ENCODE measurements at regions of chr7 and their contacts with region 1.

Region 1: GRCh38 chr7:106659963-106660861 is 746 bp downstream of the CCDC71L start:
- DNase-seq: peak; percentile 58 to 84 (median 68)
- ATAC-seq: peak; percentile 72
- H3K4me3 ChIP-seq: peak overlapping the region; percentile 73
- H3K4me3 Mint-ChIP-seq: peak overlapping the region; percentile 85 to 97 (median 91)
- H3K27ac ChIP-seq: peak overlapping the region; percentile 68
- H3K27ac Mint-ChIP-seq: peak overlapping the region; percentile 86 to 97 (median 92)
- H3K4me1 ChIP-seq: peaks cover 13 to 16% of the 10 kb centered on the region in 2 donors
- H3K4me1 Mint-ChIP-seq: peaks cover 0 to 41% (median 29%) of the 10 kb centered on the region in 7 donors
- H3K27me3 ChIP-seq: no peaks in the 10 kb centered on the region
- H3K27me3 Mint-ChIP-seq: peaks cover 0 to 3% (median 0%) of the 10 kb centered on the region in 5 donors

Region 2: DNA sequence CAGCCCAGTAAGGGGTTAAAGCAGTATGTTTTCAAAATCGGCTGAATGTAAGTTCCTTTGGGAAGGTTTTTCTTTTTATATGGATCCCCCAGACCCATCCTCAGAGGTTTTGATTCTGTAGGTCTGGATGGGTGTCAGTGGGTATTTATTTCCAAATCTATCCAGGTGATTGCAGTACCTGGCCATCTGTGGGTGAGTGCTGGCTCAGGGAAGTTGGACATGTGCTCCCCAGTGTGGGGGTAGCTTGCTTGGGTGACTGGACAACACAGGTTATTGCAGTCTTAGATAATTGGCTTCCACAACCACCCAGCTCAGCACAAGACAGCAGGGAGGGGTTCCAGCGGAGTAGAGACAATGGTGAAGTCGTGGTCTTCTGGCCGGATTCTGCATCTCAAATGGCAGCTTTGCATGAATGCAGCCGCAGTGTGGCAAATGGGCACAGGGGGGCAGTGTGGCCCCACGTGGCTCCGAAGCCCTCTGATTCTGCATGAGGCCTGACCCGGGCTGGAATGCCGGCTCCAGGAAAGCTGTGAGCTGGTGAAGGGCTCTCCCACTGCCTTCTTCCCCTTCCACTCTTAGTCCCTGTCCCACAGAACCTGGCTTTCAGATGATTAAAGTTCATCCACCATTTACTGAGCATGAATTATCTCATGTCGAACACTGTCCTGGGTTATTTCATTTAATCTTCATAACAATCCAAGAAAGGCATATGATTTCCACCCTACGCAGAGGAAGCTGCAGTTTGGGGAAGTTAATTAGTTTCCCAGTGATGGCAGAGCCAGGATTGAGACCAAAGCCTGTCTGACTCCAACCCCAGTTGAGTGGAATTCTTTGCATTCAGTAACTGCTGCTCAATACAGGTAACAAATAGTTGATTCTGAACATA is 483.6 kb before region 1 on chr7:
- CTCF ChIA-PET with region 1: no interaction called
- POLR2A ChIA-PET with region 1: no interaction called
- intact Hi-C with region 1: loop called (anchors 1 kb)
- DNase-seq: peak; percentile 24 to 73 (median 57)
- ATAC-seq: peak; percentile 92
- H3K4me3 ChIP-seq: no peak overlapping the region
- H3K4me3 Mint-ChIP-seq: no peak overlapping the region
- H3K27ac ChIP-seq: no peak overlapping the region
- H3K27ac Mint-ChIP-seq: no peak overlapping the region
- H3K4me1 ChIP-seq: no peaks in the 10 kb centered on the region
- H3K4me1 Mint-ChIP-seq: peaks cover 0 to 5% (median 0%) of the 10 kb centered on the region in 7 donors
- H3K27me3 ChIP-seq: peaks cover 0 to 7% of the 10 kb centered on the region in 2 donors
- H3K27me3 Mint-ChIP-seq: peaks cover 9 to 22% (median 19%) of the 10 kb centered on the region in 5 donors

Region 3: DNA sequence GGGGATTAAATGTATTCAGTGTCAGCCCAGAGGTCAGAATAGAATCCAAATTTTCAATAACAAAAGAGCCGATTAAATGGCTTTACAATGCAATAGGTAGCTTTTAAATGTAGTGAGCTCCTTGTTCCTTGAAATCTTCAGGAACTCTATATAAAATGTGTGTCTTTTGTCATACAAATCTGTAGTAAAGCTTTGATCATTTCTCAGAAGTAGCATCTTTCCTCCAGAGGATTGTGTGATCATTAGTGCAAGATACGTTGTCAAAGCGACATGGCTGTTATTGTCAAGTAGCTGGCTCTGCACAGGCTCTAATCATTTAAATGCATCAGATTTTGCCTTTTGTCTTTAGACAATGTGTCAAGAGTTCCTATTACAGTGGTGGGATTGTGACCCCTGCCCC is 259.3 kb before region 1 on chr7:
- CTCF ChIA-PET with region 1: no interaction called
- POLR2A ChIA-PET with region 1: no interaction called
- intact Hi-C with region 1: no loop called
- DNase-seq: no peak
- ATAC-seq: no peak
- H3K4me3 ChIP-seq: no peak overlapping the region
- H3K4me3 Mint-ChIP-seq: no peak overlapping the region
- H3K27ac ChIP-seq: no peak overlapping the region
- H3K27ac Mint-ChIP-seq: no peak overlapping the region
- H3K4me1 ChIP-seq: no peaks in the 10 kb centered on the region
- H3K4me1 Mint-ChIP-seq: peaks cover 0 to 8% (median 0%) of the 10 kb centered on the region in 7 donors
- H3K27me3 ChIP-seq: no peaks in the 10 kb centered on the region
- H3K27me3 Mint-ChIP-seq: peaks cover 24 to 63% (median 33%) of the 10 kb centered on the region in 5 donors

Region 4: DNA sequence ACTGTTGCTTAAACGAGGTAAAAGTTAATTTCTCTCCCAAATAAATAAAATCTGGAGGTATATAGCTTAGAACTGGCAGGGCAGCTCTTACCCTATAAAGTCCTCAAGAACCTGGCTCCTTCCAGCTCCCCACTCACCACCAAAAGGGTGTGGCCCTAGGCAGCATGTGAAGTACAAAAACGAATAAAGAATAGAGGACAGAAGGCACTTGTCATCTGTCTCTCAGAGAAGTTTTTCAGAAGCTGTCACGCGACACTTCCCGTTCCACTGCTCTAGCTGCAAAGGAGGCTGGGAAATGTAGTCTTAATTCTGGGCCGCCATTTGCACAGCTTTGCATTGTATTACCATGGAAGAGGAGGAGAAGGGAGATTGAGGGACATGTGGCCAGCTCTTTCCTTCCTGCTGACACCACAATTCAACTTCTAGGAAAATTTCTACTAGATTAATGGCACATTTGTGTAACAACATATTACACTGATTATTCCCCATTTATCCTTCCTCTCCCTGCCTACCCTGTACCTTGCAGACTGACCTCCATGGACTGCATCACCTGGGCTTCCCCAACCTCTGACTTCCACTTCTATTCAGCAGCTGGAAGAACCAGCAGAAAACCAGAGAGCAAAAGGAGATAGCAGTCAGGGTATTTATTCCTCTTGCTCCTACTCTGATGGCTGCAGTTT is 61.4 kb before region 1 on chr7:
- CTCF ChIA-PET with region 1: no interaction called
- POLR2A ChIA-PET with region 1: interaction called, 3 read pairs
- intact Hi-C with region 1: loop called (anchors 1 to 2 kb)
- DNase-seq: peak; percentile 19 to 80 (median 72)
- ATAC-seq: peak; percentile 100
- H3K4me3 ChIP-seq: no peak overlapping the region
- H3K4me3 Mint-ChIP-seq: peak overlapping the region in 8 of 10 donors; percentile 18 to 75 (median 66)
- H3K27ac ChIP-seq: no peak overlapping the region
- H3K27ac Mint-ChIP-seq: peak overlapping the region in 5 of 9 donors; percentile 52 to 69 (median 58)
- H3K4me1 ChIP-seq: no peaks in the 10 kb centered on the region
- H3K4me1 Mint-ChIP-seq: peaks cover 0 to 9% (median 6%) of the 10 kb centered on the region in 7 donors
- H3K27me3 ChIP-seq: no peaks in the 10 kb centered on the region
- H3K27me3 Mint-ChIP-seq: peaks cover 0 to 14% (median 5%) of the 10 kb centered on the region in 5 donors

Region 5: DNA sequence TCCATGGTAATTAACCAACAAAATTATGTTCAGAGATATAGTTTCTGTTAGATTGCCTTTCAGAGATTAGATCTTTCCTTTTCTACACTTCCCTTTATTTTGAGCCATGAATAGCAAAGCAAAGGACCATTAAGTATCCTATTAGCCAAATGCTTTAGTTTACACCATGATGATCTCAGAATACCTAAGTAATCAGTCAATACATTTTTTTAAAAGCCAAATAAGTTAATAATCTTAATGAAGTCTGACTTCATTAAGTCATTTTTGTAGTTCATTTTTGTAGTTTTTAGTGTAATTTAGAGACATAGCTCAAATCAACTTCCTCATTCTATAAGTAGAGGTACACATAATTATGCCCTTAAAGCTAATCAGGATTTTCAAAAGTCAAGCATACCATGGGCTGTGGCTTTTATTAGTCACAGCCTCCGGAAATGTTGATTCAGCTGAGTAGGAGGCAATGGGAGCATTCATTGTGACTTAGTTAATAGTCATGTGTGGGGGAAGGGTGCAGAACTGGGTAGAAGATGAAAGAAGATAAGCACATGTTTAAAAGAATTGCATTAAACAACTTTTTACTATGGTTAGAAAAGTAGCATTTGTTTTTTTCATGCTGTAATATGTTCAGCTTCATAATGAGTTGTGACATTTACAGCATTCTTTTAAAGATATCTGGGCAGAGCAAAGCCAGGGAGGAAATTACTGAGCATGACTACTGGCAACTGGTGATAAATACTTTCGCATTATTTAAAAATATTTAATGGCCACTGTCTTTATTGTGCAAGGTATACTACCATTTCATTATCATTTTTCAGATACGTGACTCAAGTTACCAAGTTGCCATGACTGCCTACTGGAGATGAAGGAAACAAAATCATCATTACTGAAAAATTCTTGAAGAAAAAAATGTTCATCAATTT is 58.0 kb after region 1 on chr7:
- CTCF ChIA-PET with region 1: no interaction called
- POLR2A ChIA-PET with region 1: no interaction called
- intact Hi-C with region 1: loop called in 1 of 2 experiments (anchors 1 kb)
- DNase-seq: peak in 1 of 9 donors; percentile 70
- ATAC-seq: peak; percentile 94
- H3K4me3 ChIP-seq: no peak overlapping the region
- H3K4me3 Mint-ChIP-seq: no peak overlapping the region
- H3K27ac ChIP-seq: no peak overlapping the region
- H3K27ac Mint-ChIP-seq: no peak overlapping the region
- H3K4me1 ChIP-seq: peaks cover 6 to 19% of the 10 kb centered on the region in 2 donors
- H3K4me1 Mint-ChIP-seq: peaks cover 0 to 6% (median 0%) of the 10 kb centered on the region in 7 donors
- H3K27me3 ChIP-seq: no peaks in the 10 kb centered on the region
- H3K27me3 Mint-ChIP-seq: no peaks in the 10 kb centered on the region

Region 6: GRCh38 chr7:106767498-106768323 is 107.5 kb after region 1 on chr7:
- CTCF ChIA-PET with region 1: no interaction called
- POLR2A ChIA-PET with region 1: no interaction called
- intact Hi-C with region 1: loop called (anchors 1 to 2 kb)
- DNase-seq: peak in 7 of 9 donors; percentile 5 to 38 (median 18)
- ATAC-seq: peak; percentile 71
- H3K4me3 ChIP-seq: peak overlapping the region; percentile 36
- H3K4me3 Mint-ChIP-seq: peak overlapping the region; percentile 58 to 83 (median 74)
- H3K27ac ChIP-seq: no peak overlapping the region
- H3K27ac Mint-ChIP-seq: peak overlapping the region; percentile 26 to 94 (median 56)
- H3K4me1 ChIP-seq: peaks cover 9 to 15% of the 10 kb centered on the region in 2 donors
- H3K4me1 Mint-ChIP-seq: peaks cover 15 to 33% (median 28%) of the 10 kb centered on the region in 7 donors
- H3K27me3 ChIP-seq: no peaks in the 10 kb centered on the region
- H3K27me3 Mint-ChIP-seq: no peaks in the 10 kb centered on the region

Region 7: DNA sequence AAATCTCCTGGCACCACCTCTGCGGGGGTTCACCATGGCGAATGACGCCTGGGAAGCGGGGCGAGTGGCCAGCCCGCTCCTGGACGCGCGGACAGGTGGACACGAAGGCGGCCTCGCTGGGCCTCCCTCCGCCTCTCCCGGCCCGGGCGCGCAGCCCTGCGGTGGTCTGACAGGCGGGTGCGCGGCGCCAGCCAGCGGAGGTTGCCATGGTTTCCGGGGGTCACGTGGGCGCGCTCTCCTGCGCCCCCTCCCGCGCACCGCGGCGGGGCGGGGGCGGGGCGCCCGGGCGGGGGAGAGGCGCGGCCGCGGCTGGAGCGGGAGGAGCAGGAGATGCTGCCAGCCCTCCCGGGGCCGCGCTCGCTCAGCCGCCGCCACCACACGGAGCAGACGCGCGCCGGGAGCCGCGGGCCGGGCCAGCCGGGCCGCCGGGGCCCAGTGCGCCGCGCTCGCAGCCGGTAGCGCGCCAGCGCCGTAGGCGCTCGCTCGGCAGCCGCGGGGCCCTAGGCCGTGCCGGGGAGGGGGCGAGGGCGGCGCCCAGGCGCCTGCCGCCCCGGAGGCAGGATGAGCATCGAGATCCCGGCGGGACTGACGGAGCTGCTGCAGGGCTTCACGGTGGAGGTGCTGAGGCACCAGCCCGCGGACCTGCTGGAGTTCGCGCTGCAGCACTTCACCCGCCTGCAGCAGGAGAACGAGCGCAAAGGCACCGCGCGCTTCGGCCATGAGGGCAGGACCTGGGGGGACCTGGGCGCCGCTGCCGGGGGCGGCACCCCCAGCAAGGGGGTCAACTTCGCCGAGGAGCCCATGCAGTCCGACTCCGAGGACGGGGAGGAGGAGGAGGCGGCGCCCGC is 384.4 kb after region 1 on chr7 and contains the start of gene PRKAR2B:
- CTCF ChIA-PET with region 1: no interaction called
- POLR2A ChIA-PET with region 1: no interaction called
- intact Hi-C with region 1: loop called in 1 of 2 experiments (anchors 2 kb)
- DNase-seq: peak; percentile 69 to 81 (median 79)
- ATAC-seq: peak; percentile 96
- H3K4me3 ChIP-seq: peak within 1 kb of the TSS; percentile 53
- H3K4me3 Mint-ChIP-seq: peak within 1 kb of the TSS; percentile 78 to 96 (median 90)
- H3K27ac ChIP-seq: peak within 1 kb of the TSS; percentile 33
- H3K27ac Mint-ChIP-seq: peak within 1 kb of the TSS in 7 of 9 donors; percentile 48 to 89 (median 77)
- H3K4me1 ChIP-seq: peaks cover 4 to 10% of the 10 kb centered on the region in 2 donors
- H3K4me1 Mint-ChIP-seq: peaks cover 11 to 19% (median 15%) of the 10 kb centered on the region in 7 donors
- H3K27me3 ChIP-seq: peaks cover 4 to 8% of the 10 kb centered on the region in 2 donors
- H3K27me3 Mint-ChIP-seq: peaks cover 13 to 47% (median 29%) of the 10 kb centered on the region in 5 donors
- total RNA-seq, gene PRKAR2B: 0.43 to 5.0 (median 0.67) TPM

Region 8: DNA sequence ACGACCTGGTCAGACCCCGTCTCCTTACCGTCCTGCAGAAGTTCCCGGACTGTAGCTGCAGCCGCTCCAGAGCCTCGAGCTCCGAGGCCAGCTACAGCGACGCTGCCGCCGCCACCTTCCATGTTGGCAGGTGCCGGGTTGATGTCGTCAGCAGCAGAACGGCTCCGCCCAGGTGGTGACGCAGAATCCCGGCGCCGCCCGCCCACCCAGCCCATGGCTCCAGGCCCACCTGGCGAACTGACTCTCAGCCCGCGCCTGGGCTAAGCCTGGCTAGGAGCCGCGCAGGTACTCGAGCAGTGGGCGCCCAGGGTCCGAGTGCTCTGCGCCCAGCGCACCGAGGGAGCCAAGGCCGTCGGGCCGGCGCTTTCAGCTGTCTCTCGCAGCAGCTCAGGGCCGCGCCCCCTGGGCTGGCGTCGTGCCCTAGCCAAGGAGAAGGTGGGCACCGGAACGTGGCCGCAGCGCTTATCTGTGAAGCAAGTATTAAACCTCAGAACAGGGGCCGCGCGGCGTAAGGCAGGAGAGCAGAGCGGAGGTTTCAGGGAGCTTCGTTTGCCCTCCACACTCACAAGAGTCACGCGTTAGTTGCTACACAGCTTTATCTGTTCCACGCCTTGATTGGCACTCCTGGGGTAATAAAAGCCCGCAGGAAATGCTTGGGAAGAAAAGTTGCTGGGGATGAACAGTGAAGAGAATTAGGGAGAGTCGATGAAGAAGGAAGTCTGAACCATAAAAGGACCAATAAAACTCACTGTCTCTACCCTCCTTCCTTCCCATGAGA is 903.8 kb after region 1 on chr7 and contains the starts of genes COG5 and DUS4L:
- CTCF ChIA-PET with region 1: no interaction called
- POLR2A ChIA-PET with region 1: no interaction called
- intact Hi-C with region 1: loop called in 1 of 2 experiments (anchors 2 kb)
- DNase-seq: peak; percentile 78 to 88 (median 84)
- ATAC-seq: peak; percentile 91
- H3K4me3 ChIP-seq: peak within 1 kb of the TSS; percentile 86
- H3K4me3 Mint-ChIP-seq: peak within 1 kb of the TSS; percentile 76 to 99 (median 91)
- H3K27ac ChIP-seq: peak within 1 kb of the TSS; percentile 98
- H3K27ac Mint-ChIP-seq: peak within 1 kb of the TSS; percentile 87 to 97 (median 93)
- H3K4me1 ChIP-seq: peaks cover 40 to 50% of the 10 kb centered on the region in 2 donors
- H3K4me1 Mint-ChIP-seq: peaks cover 40 to 76% (median 62%) of the 10 kb centered on the region in 7 donors
- H3K27me3 ChIP-seq: no peaks in the 10 kb centered on the region
- H3K27me3 Mint-ChIP-seq: no peaks in the 10 kb centered on the region
- total RNA-seq, gene COG5: 38.3 to 77.0 (median 60.7) TPM
- total RNA-seq, gene DUS4L: 10.0 to 14.1 (median 11.2) TPM